ENCODE measurements at regions of chr2 and their contacts with region 1.

Region 1: DNA sequence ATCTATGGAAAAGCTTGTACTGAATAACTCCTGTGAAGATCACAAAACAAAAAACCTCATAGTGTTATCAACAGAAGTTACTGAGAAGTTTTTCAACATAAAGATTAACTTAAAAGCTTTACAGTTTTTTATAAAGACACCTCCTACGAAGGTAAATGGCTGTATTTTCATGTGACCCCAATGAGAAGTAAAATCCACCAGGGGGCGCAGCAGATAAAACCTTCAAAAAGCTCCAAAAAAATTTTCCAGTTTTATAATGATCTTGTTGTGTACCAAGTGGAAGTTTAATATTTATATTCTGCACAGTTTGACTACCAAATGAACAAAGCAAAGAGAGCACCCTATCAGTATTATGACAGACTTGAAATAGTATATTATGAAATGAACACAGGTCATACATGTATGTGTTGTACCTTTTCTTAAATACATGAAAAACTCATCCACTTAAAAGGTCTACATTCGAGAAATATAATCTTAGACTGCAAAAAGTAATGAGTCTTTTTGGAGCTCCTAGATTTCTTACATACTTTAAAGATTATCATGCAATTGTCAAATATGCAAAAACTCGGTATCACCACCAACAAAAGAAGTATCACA is 38.5 kb downstream of the PNO1 start:
- DNase-seq: peak; percentile 5
- H3K4me3 ChIP-seq: no peak overlapping the region
- CTCF ChIP-seq: peak; percentile 40

Region 2: DNA sequence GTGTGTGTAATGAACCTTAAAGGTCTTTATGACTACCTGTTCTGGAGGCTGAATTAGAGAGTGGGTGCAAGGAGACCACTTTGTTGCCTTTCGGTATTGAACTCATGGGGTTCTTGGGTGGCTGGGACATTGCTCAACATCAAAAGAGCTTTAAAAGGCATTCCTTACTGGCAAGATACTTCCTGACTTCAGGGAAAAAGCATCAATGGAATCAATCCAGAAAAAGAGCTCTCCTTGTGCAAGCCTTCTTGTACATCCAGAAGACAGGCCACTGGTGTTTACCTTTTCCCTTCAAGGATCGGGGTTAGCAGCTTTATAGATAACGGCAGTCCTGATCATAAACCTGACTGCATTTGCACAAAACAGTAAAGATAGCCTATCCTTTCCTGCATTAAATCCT is 29.0 kb before region 1 on chr2:
- CTCF ChIA-PET with region 1: interaction called, 19 read pairs
- POLR2A ChIA-PET with region 1: no interaction called
- DNase-seq: peak; percentile 24
- H3K4me3 ChIP-seq: no peak overlapping the region
- CTCF ChIP-seq: no peak

Region 3: GRCh38 chr2:68185541-68186164 is 10.6 kb before region 1 on chr2:
- CTCF ChIA-PET with region 1: interaction called, 50 read pairs
- POLR2A ChIA-PET with region 1: no interaction called
- DNase-seq: no peak
- H3K4me3 ChIP-seq: no peak overlapping the region
- CTCF ChIP-seq: peak; percentile 51

Region 4: DNA sequence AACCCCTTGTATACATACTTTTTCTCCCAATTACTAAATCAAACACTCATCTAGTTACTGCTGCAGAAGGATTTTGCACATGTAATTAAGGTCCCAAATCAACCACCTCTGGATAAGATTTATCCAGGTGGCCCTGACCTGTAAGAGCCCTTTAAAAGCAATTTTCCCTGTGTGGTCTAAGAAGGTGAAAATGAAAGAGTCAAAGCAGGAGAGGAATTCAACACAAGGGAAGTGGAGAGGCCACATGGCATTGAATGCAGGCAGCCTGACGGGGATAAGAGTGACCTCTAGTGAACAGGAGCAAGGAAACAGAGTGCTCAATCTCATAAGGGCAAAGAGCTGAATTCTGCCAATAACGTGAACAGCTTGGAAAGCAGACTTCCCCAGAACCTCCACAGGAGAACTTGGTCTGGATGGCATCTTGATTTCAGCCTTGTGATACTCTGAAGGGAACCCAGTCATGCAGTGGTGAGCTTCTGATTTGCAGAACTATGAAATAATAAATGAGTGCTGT is 29.0 kb after region 1 on chr2:
- CTCF ChIA-PET with region 1: interaction called, 50 read pairs
- POLR2A ChIA-PET with region 1: no interaction called
- DNase-seq: no peak
- H3K4me3 ChIP-seq: no peak overlapping the region
- CTCF ChIP-seq: no peak

Region 5: GRCh38 chr2:68244456-68244855 is 48.2 kb after region 1 on chr2:
- CTCF ChIA-PET with region 1: interaction called, 82 read pairs
- POLR2A ChIA-PET with region 1: no interaction called
- DNase-seq: no peak
- H3K4me3 ChIP-seq: no peak overlapping the region
- CTCF ChIP-seq: no peak

Region 6: GRCh38 chr2:68272246-68272994 is 76.2 kb after region 1 on chr2:
- CTCF ChIA-PET with region 1: interaction called, 22 read pairs
- POLR2A ChIA-PET with region 1: no interaction called
- DNase-seq: no peak
- H3K4me3 ChIP-seq: no peak overlapping the region
- CTCF ChIP-seq: no peak

Region 7: GRCh38 chr2:68309426-68309825 is 113.2 kb after region 1 on chr2:
- CTCF ChIA-PET with region 1: interaction called, 11 read pairs
- POLR2A ChIA-PET with region 1: no interaction called
- DNase-seq: no peak
- H3K4me3 ChIP-seq: no peak overlapping the region
- CTCF ChIP-seq: no peak

Measured in AG04449 (cell line).